Dendritic cell treated with granulocyte-macrophage colony-stimulating factor and Interleukin-4, amounts not matched to agents 40 ng/mL and 50 ng/mL, for 4 days (primary cell): ENCODE measurements at regions of chr20 and their contacts with region 1.

Region 1: GRCh38 chr20:44460795-44461141 is 14.9 kb upstream of the TTPAL start:
- H3K4me3 Mint-ChIP-seq: no peak overlapping the region
- H3K27ac Mint-ChIP-seq: no peak overlapping the region
- H3K4me1 Mint-ChIP-seq: peaks cover 3% of the 10 kb centered on the region
- H3K27me3 Mint-ChIP-seq: peaks cover 3% of the 10 kb centered on the region

Region 2: GRCh38 chr20:43870484-43870883 is 590.3 kb before region 1 on chr20:
- intact Hi-C with region 1: no loop called
- H3K4me3 Mint-ChIP-seq: no peak overlapping the region
- H3K27ac Mint-ChIP-seq: no peak overlapping the region
- H3K4me1 Mint-ChIP-seq: no peaks in the 10 kb centered on the region
- H3K27me3 Mint-ChIP-seq: peaks cover 25% of the 10 kb centered on the region

Region 3: DNA sequence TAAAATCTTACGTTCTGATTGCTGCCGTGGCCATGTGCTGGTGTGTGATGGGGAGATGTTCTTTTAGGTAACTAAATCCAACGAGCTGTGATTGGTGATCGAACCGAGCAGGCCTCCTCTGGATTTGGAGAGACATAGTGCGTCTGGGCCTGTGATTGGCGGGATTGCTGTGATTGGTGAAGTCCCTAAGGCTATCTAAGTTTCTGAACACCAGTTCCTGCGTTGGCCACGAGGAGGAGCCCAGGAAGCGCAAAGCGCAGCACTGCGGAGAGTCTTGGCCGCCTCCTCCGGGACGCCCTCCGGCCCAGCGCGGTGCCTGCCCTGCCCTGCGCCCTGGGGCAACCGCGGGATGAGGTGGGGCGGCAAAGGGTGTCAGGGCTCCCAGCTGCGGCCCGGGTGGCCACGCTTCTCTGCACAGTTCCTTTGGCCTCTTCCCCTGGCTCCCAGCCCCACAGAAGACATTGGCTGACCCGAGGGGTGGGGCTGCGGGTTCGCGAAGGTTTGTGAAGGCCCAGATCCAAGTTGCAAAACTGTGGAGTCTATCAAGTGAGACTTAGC is 72.2 kb before region 1 on chr20:
- intact Hi-C with region 1: loop called (anchors 1 kb)
- H3K4me3 Mint-ChIP-seq: no peak overlapping the region
- H3K27ac Mint-ChIP-seq: no peak overlapping the region
- H3K4me1 Mint-ChIP-seq: peaks cover 9% of the 10 kb centered on the region
- H3K27me3 Mint-ChIP-seq: peaks cover 16% of the 10 kb centered on the region

Region 4: DNA sequence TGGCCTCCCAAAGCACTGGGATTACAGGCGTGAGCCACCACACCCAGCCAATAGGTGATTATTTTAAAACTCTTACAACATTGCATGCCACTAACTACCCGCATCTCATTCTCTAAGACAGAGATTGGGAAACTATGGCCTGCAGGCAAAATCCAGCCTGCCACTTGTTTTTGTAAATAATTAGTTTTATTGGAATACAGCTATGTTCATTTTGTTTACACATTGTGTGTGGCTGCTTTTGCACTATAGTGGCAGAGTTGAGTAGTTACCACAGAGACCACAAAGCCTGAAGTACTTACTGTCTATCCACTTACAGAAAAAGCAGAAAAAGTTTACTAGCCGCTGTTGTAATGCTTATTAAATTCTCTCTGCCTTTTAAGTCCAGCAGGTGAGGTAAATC is 105.2 kb after region 1 on chr20:
- intact Hi-C with region 1: no loop called
- H3K4me3 Mint-ChIP-seq: no peak overlapping the region
- H3K27ac Mint-ChIP-seq: no peak overlapping the region
- H3K4me1 Mint-ChIP-seq: no peaks in the 10 kb centered on the region
- H3K27me3 Mint-ChIP-seq: no peaks in the 10 kb centered on the region